ENCODE measurements at regions of chr10 and their contacts with region 1.

Region 1: DNA sequence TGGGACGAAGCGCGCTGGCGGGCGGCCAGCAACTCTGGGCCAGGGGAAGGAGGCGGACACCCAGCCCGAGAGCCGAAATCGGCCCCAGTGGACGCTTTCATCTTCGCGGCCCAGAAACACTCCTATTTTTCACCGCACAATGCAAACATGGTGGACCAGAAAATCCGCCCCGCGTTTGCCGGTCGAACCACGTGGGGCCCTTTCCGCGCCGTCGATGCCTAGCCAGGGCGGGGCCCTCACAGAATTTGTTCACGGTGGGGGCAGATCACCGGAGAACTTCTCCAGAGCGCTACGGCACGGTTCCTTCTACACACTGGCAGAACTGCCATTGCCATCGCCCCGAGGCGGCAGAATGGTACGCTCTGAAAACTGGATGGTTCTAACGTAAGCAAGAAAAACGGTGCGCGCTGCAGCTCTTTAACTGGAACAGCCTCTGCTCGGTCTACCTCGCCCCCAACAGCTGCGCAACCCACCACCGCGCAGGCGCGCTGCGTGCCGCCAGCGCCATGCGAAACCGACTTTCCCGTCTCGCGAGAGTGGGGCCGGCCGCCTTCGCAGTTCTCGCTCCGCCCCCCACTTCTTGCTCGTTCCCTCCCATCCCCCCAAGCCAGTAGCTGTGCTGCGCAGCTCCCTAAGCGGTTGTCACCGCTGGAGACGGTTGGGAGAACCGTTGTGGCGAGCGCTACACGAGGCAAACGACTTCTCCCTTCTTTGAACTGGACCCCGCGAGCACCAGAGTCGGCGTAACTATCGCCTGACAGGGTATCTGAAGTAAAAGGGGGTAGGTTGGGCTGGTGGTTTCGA is at the start of gene HNRNPH3:
- DNase-seq: peak; percentile 99
- H3K4me3 ChIP-seq: peak within 1 kb of the TSS; percentile 88
- H3K27ac ChIP-seq: peak within 1 kb of the TSS; percentile 92 to 94
- H3K4me1 ChIP-seq: peaks cover 9% of the 10 kb centered on the region
- H3K27me3 ChIP-seq: no peaks in the 10 kb centered on the region
- CTCF ChIP-seq: peak in 1 of 3 donors; percentile 16
- EP300 ChIP-seq: no peak
- POLR2A ChIP-seq: peak; percentile 100
- total RNA-seq, gene HNRNPH3: 38.9 to 173 (median 114) TPM

Region 2: DNA sequence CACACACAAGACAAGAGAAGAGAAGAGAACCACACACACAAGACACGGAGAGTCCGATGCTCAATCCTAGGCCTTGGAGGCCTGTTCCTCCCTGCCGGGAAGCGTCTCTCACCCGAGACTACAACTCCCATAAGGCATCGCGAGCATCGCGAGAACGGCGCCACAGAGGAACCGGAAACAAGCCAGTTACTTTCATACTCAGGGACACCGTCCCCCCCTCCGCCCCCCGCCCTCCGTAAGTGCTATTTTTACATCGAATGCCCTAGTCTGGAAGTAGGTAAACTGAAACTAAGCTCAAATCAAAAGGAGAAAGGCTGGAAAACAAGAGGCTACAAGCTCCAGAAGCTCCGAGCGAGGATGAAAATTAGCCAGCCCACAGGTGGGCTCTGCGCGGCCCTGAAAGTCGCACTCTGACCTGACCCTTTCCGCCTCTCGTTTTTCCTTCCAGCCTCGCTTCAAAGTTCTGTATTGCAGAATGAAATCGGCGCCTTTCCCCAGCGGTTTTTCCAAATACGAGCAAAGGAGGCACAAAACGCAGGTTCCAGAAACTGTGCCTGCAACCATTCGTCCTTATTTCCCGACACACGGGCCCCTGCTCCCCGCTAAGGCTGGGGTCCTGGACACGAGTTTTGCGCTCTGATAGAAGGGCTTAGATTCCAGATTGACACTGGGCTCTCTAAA is 482.2 kb before region 1 on chr10:
- intact Hi-C with region 1: loop called in 2 of 4 experiments (anchors 10 kb)
- DNase-seq: peak; percentile 95 to 98 (median 98)
- H3K4me3 ChIP-seq: peak overlapping the region; percentile 87
- H3K27ac ChIP-seq: peak overlapping the region; percentile 87 to 93
- H3K4me1 ChIP-seq: no peaks in the 10 kb centered on the region
- H3K27me3 ChIP-seq: no peaks in the 10 kb centered on the region
- CTCF ChIP-seq: no peak
- EP300 ChIP-seq: no peak
- POLR2A ChIP-seq: peak; percentile 57

Region 3: GRCh38 chr10:68212721-68213352 is 118.8 kb before region 1 on chr10:
- intact Hi-C with region 1: loop called in 1 of 4 experiments (anchors 10 kb)
- DNase-seq: no peak
- H3K4me3 ChIP-seq: no peak overlapping the region
- H3K27ac ChIP-seq: no peak overlapping the region
- H3K4me1 ChIP-seq: no peaks in the 10 kb centered on the region
- H3K27me3 ChIP-seq: no peaks in the 10 kb centered on the region
- CTCF ChIP-seq: peak in 1 of 3 donors; percentile 26
- EP300 ChIP-seq: no peak
- POLR2A ChIP-seq: no peak

Region 4: DNA sequence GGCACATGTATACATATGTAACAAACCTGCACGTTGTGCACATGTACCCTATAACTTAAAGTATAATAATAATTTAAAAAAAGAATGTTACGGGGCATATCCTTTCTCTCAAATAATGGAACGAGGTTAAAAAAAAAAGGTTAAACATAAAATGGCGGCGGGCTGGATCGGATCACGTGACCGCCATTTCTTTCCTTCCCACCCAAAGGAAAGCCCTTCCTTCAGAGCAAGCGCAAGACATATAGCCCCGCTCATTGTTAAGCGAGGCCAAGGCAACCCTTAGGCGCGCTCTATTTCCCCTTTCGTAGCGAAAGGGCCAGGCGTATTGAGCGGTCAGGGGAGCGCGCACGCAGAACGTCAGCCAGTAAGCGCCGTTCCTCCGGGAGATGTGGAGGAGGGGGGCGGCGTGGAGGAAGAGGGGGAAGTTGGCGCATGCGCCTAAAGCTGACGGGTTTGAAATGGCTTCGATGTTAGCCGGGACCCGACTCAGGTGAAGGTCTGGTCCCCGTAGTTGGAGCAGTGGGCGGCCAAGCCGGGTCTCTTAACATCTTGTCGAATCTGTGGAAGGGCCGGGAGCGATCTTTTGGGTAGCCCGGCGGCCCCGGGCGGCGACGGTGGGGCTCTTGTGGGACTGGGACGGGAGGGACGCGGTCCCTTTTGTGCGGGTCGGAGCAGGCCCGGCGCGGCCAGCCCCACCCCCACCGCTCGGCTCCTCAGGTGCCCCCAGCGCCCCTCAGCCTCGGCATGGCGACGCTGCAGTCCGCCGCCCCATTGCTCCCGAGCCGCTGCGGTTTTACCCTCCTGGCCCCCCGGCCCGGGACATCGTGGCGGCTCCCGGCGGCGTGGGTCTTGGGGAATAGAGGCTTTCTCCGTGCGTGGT is 389.4 kb after region 1 on chr10 and contains the start of gene CCAR1:
- intact Hi-C with region 1: loop called in 1 of 4 experiments (anchors 10 kb)
- DNase-seq: peak; percentile 96 to 98 (median 97)
- H3K4me3 ChIP-seq: peak within 1 kb of the TSS; percentile 93
- H3K27ac ChIP-seq: peak within 1 kb of the TSS; percentile 94 to 96
- H3K4me1 ChIP-seq: peaks cover 4% of the 10 kb centered on the region
- H3K27me3 ChIP-seq: no peaks in the 10 kb centered on the region
- CTCF ChIP-seq: no peak
- EP300 ChIP-seq: no peak
- POLR2A ChIP-seq: peak; percentile 88
- total RNA-seq, gene CCAR1: 42.1 to 65.4 (median 52.2) TPM